Endothelial cell of umbilical vein (primary cell): ENCODE measurements at regions of chr3 and their contacts with region 1.

Region 1: DNA sequence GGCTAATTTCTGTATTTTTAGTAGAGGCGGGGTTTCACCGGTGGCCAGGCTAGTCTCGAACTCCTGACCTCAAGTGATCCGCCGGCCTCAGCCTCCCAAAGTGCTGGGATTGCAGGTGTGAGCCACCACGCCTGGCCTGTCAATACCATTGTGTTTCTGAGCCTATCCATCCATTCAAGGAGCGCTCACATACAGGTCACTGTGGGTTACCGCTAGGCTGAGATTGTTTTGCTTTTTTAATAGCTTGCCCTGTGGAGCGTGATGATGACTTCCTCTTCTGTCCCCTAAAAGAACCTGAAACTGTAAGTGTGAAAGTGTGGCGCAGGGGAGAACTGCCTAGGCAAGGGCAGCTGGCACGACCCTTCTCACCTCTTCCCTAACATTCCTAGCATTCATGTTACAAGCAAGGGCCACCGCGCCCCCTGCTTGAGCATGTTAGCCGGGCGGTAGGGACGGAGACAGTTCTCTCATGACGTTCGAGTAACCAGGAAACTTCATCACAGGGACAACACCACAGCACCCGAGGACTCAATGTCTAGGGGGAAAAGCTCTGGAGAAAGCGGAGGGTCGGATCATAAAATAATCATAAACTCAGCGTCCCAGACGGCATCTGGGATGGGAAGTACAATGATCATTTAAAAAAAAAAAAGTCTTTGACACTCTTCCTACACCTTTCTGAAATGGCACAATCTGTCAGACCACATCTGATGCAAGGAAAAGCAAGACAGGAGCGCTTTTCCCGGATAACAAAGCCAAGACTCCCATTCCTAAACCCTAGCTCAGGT is 790 bp downstream of the LAMP3 start:
- DNase-seq: no peak
- H3K4me3 ChIP-seq: peak overlapping the region in 2 of 3 experiments; percentile 31 to 72
- H3K27ac ChIP-seq: no peak overlapping the region
- H3K4me1 ChIP-seq: peaks cover 19% of the 10 kb centered on the region
- H3K27me3 ChIP-seq: no peaks in the 10 kb centered on the region
- CTCF ChIP-seq: no peak
- POLR2A ChIP-seq: no peak

Region 2: DNA sequence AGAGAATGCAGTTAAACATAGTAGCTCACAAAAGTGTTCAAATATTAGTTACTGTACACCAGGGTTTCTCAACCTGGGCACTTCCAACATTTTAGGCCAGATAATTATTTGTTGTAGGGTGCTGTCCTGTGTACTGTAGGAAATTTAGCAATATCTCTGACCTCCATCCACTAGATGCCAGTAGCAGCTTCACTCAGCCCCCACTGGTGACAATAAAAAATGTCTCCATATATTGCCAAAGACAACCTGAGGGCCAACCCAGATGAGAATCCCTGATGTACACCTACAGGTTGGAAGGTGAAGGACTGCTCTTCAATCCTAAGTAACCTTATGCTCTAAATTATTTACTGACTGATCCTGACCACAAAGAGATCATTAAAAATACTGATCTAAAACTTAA is 213.9 kb before region 1 on chr3:
- CTCF ChIA-PET with region 1: no interaction called
- POLR2A ChIA-PET with region 1: no interaction called
- dilution Hi-C with region 1: no loop called
- intact Hi-C with region 1: no loop called
- DNase-seq: no peak
- H3K4me3 ChIP-seq: no peak overlapping the region
- H3K27ac ChIP-seq: no peak overlapping the region
- H3K4me1 ChIP-seq: no peaks in the 10 kb centered on the region
- H3K27me3 ChIP-seq: no peaks in the 10 kb centered on the region
- CTCF ChIP-seq: no peak
- POLR2A ChIP-seq: no peak

Region 3: DNA sequence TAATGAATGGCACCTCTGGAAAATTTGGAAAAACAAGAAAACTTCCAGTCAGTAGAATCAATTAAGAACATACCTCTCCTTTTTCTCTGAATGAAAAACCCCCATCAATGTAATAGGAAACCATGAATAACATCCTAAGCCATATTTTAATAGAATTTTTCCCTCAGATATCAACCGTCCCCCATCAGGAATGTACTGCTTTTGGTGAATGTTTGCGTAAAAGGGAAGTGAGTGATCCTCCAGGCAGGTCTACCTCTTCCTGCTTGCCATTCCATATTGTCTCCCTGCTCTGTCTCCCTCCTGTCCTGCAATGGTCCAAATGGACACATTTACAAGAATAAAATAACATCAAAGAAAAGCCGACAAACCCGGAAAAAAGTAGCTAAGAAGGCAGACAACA is 30.0 kb before region 1 on chr3:
- CTCF ChIA-PET with region 1: interaction called, 3 read pairs
- POLR2A ChIA-PET with region 1: no interaction called
- dilution Hi-C with region 1: no loop called
- intact Hi-C with region 1: loop called (anchors 1 kb)
- DNase-seq: peak; percentile 65
- H3K4me3 ChIP-seq: no peak overlapping the region
- H3K27ac ChIP-seq: peak overlapping the region; percentile 96
- H3K4me1 ChIP-seq: peaks cover 34% of the 10 kb centered on the region
- H3K27me3 ChIP-seq: no peaks in the 10 kb centered on the region
- CTCF ChIP-seq: no peak
- POLR2A ChIP-seq: no peak